AG04449 (cell line): ENCODE measurements at regions of chr3 and their contacts with region 1.

Region 1: GRCh38 chr3:31361371-31362273 is 171.1 kb upstream of the STT3B start:
- DNase-seq: peak; percentile 49
- H3K4me3 ChIP-seq: no peak overlapping the region
- CTCF ChIP-seq: no peak

Region 2: DNA sequence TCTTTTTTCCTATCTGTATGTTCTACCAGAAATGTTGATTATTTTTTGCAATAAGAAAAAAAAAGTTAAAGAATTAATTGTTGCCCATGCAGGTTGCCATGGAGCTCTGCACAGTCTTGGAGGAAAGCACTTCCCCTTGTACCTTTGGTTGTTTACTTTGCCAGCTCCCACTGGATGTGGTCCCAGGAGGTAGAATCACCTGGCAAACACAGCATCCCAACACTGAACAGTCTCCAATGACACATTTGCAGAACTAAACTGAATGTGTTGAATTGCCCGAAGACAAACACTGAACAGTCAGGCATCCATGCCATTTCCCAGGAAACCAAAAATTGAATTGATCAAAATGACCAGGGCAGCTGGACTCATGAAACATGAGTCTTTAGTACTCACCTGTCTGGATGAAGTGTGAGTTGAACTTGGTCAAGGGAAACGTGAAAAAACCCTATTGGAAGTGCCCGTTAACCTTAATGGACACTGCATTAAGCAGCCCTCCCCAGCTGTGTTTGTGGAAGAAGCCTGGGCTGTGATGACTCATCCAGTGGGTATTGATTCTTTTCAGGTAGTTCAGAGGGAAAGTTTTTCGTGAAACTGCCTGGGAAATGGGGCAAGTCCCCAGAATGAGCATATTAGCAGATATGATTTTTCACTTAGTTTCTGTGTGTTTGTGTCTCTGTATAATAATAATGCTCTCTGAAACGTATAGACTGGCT is 113.6 kb before region 1 on chr3:
- CTCF ChIA-PET with region 1: no interaction called
- POLR2A ChIA-PET with region 1: no interaction called
- DNase-seq: no peak
- H3K4me3 ChIP-seq: no peak overlapping the region
- CTCF ChIP-seq: no peak

Region 3: DNA sequence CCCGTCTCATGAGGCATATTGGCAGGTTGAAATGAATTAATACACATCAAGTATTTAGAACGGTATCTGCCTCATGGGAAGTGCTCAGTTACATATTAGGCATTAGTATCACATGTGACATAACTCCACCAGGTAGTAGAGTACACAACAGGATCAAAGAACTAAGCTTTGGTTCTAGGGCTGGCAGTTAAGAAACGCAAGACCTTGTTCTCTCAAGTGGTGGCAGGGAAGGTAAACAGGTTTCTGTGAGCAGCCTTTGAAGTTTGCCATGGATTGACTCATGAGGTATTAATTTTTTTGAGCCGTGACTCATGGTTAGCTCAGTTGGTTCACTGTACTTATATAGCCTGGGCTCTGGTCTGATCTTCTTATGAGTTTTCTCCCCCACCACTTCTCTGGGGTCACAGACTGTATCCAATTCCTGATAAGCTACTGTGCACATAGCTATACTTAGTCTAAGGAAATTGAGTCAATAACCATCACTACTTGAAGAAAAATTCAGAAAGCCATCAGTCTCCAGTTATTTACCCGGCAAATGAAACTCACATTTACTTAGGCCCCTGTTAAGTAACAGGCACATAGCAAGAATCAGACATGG is 15.5 kb after region 1 on chr3:
- CTCF ChIA-PET with region 1: interaction called, 12 read pairs
- POLR2A ChIA-PET with region 1: no interaction called
- DNase-seq: no peak
- H3K4me3 ChIP-seq: no peak overlapping the region
- CTCF ChIP-seq: no peak

Region 4: GRCh38 chr3:31550452-31551251 is 189.0 kb after region 1 on chr3:
- CTCF ChIA-PET with region 1: no interaction called
- POLR2A ChIA-PET with region 1: no interaction called
- DNase-seq: no peak
- H3K4me3 ChIP-seq: no peak overlapping the region
- CTCF ChIP-seq: peak; percentile 47